Aorta (tissue), 5 donors: ENCODE measurements at regions of chr13 and their contacts with region 1.

Region 1: DNA sequence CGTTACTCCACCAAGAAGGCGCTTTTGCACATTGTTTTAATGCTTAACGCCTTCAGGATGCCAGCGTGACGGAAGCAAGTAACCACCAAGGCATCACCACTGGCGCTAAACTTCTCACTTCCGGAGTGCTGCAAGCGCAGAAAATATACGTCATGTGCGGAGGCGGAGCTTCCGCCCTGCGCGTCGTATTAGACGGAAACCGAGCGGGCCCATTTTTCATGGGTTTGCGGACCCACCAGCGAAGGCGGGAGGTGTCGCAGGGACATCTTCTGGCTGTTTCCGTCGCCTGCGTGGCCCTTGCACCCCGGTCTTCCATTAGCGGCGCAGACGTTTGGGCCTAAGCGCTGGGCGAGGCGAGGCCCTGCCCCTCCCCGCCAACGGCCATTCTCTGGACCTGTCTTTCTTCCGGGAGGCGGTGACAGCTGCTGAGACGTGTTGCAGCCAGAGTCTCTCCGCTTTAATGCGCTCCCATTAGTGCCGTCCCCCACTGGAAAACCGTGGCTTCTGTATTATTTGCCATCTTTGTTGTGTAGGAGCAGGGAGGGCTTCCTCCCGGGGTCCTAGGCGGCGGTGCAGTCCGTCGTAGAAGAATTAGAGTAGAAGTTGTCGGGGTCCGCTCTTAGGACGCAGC is at the start of gene ERCC5:
- DNase-seq: peak; percentile 96 to 98
- ATAC-seq: peak; percentile 97
- H3K4me3 ChIP-seq: peak within 1 kb of the TSS; percentile 85 to 89
- H3K27ac ChIP-seq: peak within 1 kb of the TSS; percentile 78 to 87
- H3K4me1 ChIP-seq: peaks cover 0 to 4% of the 10 kb centered on the region in 2 donors
- H3K27me3 ChIP-seq: no peaks in the 10 kb centered on the region
- total RNA-seq, gene ERCC5: 30.5 to 53.4 TPM

Region 2: DNA sequence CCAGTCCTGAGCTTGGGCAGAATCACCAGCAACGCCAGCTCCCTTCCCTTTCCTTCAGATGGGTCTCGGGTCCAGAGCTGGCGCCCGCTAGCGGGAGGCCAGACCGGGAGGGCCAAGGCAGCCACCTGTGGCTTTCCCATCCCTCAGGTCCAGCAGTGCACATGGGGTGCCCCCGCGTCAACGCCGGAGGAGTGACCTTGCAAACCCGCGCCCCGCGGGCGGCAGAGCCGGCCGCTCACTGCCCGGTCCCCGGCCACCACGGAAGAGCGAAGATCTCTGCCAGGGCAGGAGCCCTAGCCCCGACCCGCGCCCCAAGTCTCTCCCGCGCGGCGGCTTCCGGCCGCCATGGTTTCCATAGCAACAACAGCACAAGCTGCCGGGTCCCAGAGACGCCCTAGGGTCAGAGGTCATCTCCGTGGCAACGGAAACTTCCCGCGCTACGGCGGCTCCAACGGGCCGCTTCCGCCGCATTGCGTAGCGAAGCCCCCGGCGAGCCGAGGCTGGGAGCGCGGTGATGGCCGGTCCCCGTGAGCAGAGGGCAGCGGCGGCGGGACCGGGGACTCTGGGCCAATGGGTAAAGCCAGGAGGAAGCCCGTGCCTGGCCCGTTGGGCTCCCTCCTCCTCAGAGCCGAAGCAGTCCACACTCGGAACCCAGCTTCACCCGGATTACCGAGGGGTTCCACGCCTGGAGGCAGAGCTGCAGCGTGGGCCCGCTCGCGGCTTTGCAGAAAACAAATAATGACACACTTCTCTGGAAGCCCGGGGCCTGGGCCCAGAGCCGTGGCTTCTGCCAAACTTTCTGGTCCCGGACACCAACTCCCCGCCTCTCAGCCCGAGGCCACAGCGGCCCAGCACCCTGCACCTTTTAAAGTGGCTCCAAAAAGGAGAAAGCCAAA is 451.3 kb before region 1 on chr13:
- intact Hi-C with region 1: loop called (anchors 5 to 10 kb)
- DNase-seq: peak; percentile 97 to 98
- ATAC-seq: peak; percentile 96
- H3K4me3 ChIP-seq: peak overlapping the region; percentile 65 to 89
- H3K27ac ChIP-seq: peak overlapping the region in 1 of 2 donors; percentile 46
- H3K4me1 ChIP-seq: no peaks in the 10 kb centered on the region
- H3K27me3 ChIP-seq: no peaks in the 10 kb centered on the region

Region 3: GRCh38 chr13:102580552-102581169 is 265.1 kb before region 1 on chr13:
- intact Hi-C with region 1: loop called (anchors 2 to 5 kb)
- DNase-seq: no peak
- ATAC-seq: peak; percentile 70
- H3K4me3 ChIP-seq: no peak overlapping the region
- H3K27ac ChIP-seq: no peak overlapping the region
- H3K4me1 ChIP-seq: no peaks in the 10 kb centered on the region
- H3K27me3 ChIP-seq: no peaks in the 10 kb centered on the region

Region 4: DNA sequence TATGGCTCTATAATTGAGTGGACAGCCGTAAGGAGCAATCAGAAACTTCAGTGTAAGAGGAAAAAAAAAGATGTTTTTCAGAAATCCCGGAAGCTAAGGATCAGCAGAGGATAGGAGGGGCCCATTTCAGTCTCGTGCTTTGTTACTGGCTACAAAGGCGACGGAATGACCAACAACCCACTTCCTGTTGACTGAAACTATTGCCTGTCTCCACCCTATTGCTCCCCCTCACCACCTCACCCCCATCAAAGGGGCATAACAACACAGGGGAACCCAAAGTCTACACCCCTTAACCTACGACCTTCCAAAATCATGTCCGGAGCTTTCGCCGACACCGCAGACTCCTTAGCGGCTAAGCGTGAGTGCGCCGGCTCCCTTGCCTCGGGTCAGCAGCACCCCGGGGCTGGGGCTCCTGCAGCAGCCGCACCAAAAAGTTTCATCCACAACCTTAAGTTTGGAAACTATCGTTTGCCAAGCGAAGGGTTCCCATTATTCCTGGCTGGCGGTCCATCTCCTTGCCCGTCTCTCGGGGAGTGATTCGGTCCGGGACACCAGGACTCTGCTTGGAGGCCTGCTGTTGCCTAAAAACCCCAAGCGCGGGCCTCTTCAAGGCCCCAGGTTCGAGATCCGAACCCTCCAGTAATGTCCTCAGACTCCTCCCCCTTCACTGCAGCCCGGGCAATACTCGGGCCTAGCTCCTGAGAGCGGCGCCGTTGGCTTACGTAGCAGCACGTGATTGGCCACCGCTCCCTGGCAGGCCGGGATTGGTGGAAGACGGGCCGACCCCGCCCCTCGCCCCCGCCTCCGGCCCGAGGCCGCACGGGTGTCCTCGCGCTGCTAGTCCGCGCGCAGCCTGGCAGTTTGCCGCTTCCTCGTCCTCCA is 249.4 kb before region 1 on chr13 and contains the start of gene TPP2:
- intact Hi-C with region 1: loop called (anchors 2 to 5 kb)
- DNase-seq: peak; percentile 100
- ATAC-seq: peak; percentile 99
- H3K4me3 ChIP-seq: peak within 1 kb of the TSS; percentile 92 to 99
- H3K27ac ChIP-seq: peak within 1 kb of the TSS; percentile 58 to 99
- H3K4me1 ChIP-seq: peaks cover 1 to 2% of the 10 kb centered on the region in 2 donors
- H3K27me3 ChIP-seq: no peaks in the 10 kb centered on the region
- total RNA-seq, gene TPP2: 36.9 to 44.9 TPM

Region 5: DNA sequence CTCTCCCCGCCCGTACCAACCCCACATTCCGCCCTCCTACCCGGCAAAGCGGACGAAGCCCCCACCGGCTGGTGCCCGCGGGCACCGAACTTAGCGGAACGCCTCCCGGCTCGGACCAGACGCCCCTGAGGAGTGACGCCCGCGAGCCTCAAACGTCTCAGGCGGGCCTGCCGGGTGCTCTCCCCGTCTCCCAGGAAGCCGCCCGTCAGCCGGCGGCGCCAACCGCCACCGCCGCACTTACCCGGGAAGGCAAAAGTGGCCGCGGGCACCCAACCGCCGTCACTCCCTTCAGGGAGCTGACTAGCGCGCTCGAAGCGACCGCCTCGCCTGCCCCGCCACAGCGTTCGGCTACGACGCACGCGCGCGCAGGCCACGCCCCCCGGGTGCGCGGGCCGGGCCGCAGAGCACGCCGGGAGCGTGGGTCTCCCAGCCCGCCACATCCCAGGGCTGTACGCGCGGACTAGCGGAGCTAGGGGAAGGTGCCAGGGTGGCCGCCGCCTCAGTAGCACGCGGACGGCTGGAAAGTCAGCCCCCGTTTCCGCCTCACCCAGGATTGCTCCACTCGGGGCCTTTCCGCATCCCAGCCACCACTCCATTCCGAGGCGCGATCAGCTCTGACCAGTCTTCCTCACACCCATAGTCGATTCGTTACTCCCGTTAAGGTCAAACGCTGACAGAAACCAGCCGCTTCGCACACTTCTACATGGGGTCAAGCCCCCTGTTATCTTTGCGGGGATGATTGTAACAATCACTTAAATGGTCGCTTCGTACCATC is 72.1 kb before region 1 on chr13 and contains the start of gene TEX30:
- intact Hi-C with region 1: loop called in 1 of 2 experiments (anchors 1 kb)
- DNase-seq: peak; percentile 89 to 95
- ATAC-seq: peak; percentile 99
- H3K4me3 ChIP-seq: peak within 1 kb of the TSS; percentile 66 to 73
- H3K27ac ChIP-seq: peak within 1 kb of the TSS in 1 of 2 donors; percentile 70
- H3K4me1 ChIP-seq: no peaks in the 10 kb centered on the region
- H3K27me3 ChIP-seq: no peaks in the 10 kb centered on the region
- total RNA-seq, gene TEX30: 5.0 to 7.5 TPM

Region 6: GRCh38 chr13:102800145-102801041 is 45.4 kb before region 1 on chr13:
- intact Hi-C with region 1: loop called (anchors 2 to 5 kb)
- DNase-seq: peak; percentile 87 to 94
- ATAC-seq: peak; percentile 90
- H3K4me3 ChIP-seq: peak overlapping the region; percentile 65 to 66
- H3K27ac ChIP-seq: peak overlapping the region; percentile 14 to 59
- H3K4me1 ChIP-seq: no peaks in the 10 kb centered on the region
- H3K27me3 ChIP-seq: no peaks in the 10 kb centered on the region

Region 7: DNA sequence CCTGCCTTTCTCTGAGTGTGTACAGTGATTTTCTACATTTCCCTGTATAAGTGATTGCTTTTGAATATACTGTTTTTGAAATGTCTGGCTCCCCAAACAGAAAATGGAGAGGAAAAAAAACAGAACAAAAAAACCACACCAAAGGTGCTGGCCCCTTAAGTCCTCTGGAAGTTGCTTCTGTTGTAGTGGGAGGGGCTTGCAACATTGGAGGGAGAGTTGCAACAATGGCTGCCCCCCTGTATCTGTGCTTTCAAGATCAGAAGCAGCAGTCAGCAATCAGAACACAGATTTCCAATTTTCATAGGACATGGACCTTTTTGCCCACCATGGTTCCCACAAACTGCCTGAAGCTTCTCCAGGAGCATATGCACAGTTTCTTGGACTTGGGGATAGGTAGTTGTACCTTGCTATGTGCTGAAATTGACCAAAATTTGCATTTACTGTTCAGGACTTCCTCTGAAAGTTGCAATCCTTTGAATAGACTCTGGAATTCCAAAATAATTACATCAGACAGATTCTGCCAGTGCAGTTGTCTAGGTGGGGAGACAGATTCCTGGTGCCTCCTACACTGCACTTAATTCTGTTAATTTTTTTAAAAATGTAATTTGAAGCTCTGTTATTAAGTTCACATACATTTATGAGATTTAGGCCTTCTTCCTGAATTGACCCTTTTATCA is 33.0 kb before region 1 on chr13:
- intact Hi-C with region 1: no loop called
- DNase-seq: no peak
- ATAC-seq: no peak
- H3K4me3 ChIP-seq: no peak overlapping the region
- H3K27ac ChIP-seq: no peak overlapping the region
- H3K4me1 ChIP-seq: no peaks in the 10 kb centered on the region
- H3K27me3 ChIP-seq: no peaks in the 10 kb centered on the region